Activated B cell treated with CpG ODN at 0.5 μM for 24 hours (primary cell): ENCODE measurements at regions of chr9 and their contacts with region 1.

Region 1: GRCh38 chr9:76393963-76394679 is at the start of gene RFK:
- DNase-seq: peak; percentile 98
- ATAC-seq: peak; percentile 90
- H3K4me3 Mint-ChIP-seq: peak within 1 kb of the TSS; percentile 99
- H3K27ac Mint-ChIP-seq: peak within 1 kb of the TSS; percentile 99
- H3K4me1 Mint-ChIP-seq: peaks cover 22% of the 10 kb centered on the region
- H3K27me3 Mint-ChIP-seq: no peaks in the 10 kb centered on the region
- CTCF ChIP-seq: no peak
- total RNA-seq, gene RFK: 7.7 and 8.0 TPM in 2 replicates

Region 2: DNA sequence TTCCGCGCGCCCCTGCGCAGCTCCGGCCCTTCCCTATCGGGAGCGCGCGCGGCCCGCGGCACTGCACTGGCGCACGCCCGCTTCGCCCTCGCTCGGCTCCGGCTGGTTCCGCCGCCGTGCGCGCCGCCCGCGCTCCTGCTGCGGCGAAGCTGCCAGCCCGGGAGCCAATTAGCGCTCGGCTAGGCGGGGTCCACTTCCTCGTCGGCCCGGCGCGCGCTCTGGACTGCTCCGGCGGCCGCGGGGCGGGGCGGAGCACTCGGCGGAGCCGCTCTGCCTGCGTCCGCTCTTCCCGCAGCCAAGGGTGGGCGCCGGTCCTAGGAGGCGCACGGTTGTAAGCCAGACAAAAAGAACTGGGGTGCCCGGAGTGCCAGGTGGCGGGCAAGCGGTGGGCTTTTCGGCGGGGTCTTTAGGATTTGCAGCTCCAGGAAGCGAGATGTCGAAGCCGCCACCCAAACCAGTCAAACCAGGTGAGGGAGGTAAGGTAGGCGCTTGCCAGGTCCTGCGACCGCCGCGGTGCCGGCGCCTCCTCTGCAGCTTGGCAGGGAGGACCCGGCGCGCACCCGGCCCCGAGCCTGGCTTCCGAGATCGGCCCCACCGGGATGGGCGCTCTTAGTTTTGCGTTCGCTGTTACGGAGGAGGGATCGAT is 1305.7 kb before region 1 on chr9 and contains the start of gene OSTF1:
- CTCF ChIA-PET with region 1: no interaction called
- POLR2A ChIA-PET with region 1: no interaction called
- intact Hi-C with region 1: loop called (anchors 5 kb)
- DNase-seq: peak; percentile 93
- ATAC-seq: peak; percentile 87
- H3K4me3 Mint-ChIP-seq: peak within 1 kb of the TSS; percentile 96
- H3K27ac Mint-ChIP-seq: peak within 1 kb of the TSS; percentile 88
- H3K4me1 Mint-ChIP-seq: peaks cover 51% of the 10 kb centered on the region
- H3K27me3 Mint-ChIP-seq: no peaks in the 10 kb centered on the region
- CTCF ChIP-seq: no peak
- total RNA-seq, gene OSTF1: 59.7 and 60.1 TPM in 2 replicates

Region 3: DNA sequence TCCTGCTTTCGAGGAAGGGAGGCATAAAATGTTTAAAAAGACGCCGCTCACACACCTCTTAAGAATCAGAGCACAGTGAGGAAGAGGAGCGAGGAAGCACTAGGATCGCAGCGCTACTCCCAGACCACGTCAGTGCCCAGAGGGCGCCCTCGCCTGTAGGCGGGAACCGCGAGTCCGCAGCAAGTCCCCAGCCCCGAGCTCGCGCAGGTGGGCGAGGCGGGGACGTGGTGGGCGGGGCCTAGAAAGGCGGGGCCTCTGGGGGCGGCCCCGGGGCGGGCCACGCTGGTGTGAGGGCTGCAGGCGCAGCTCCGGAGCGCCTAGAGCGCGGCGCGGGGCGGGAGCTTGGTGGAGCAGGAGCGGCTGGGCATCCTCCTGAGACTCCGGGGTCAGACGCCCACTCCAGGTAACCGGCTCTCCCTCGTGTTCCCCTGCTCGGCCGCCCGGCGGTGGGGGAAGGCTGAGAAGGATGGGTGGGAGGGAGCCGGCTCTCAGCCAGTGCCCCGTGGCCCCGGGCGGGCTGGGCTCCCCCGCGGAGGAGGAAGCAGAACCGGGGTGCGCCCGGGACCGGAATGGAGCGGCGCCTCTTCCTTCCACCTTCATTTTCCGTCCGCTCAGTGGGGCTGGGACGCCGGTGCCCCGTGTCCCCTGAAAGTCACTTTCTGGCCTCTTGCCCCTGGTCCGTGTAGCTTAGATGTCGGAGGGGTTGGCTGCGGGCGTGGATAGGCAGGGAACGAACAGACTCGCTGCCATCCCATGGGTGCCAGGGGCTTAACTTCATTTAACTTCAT is 65.0 kb after region 1 on chr9 and contains the start of gene GCNT1:
- CTCF ChIA-PET with region 1: interaction called, 7 read pairs
- POLR2A ChIA-PET with region 1: interaction called, 14 read pairs
- intact Hi-C with region 1: loop called (anchors 1 kb)
- DNase-seq: peak; percentile 99
- ATAC-seq: peak; percentile 95
- H3K4me3 Mint-ChIP-seq: peak within 1 kb of the TSS; percentile 94
- H3K27ac Mint-ChIP-seq: peak within 1 kb of the TSS; percentile 84
- H3K4me1 Mint-ChIP-seq: peaks cover 57% of the 10 kb centered on the region
- H3K27me3 Mint-ChIP-seq: no peaks in the 10 kb centered on the region
- CTCF ChIP-seq: no peak
- total RNA-seq, gene GCNT1: 9.2 and 10.6 TPM in 2 replicates

Region 4: DNA sequence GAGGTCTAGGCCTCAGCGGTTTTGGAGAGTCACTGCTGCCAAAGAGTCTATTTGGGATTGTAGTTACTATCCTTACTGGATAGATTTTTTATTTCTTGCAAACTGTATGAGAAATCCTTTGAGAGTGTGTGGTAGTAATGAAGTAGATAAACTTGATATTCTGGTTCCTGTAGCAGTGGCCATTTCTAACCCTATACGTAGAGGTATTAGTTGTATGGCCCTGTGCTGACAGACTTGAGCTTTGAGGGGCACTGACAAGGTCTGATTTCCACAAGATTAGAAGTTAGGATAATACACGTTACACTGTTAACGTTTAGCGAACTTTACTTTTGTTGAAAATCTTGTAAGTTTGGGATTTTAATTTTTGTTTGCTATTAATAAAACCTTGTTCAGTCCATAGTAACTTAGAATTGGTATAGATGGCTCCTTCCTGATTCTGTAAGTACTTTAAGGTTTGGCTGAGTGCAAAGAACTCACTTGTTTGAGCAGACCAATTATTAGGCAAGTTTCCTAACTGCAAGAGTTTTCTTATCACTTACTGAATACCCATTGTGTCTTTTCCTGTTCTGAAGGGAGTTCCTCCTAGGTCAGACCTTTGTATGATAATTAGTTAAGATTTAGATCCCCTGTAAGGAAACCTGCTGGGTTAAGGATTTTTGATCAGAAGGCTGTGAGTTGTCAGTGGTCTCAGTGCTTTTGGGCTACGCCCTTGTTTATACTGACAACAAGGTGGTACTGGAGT is 96.3 kb after region 1 on chr9:
- CTCF ChIA-PET with region 1: no interaction called
- POLR2A ChIA-PET with region 1: no interaction called
- intact Hi-C with region 1: no loop called
- DNase-seq: no peak
- ATAC-seq: no peak
- H3K4me3 Mint-ChIP-seq: no peak overlapping the region
- H3K27ac Mint-ChIP-seq: no peak overlapping the region
- H3K4me1 Mint-ChIP-seq: peaks cover 56% of the 10 kb centered on the region
- H3K27me3 Mint-ChIP-seq: no peaks in the 10 kb centered on the region
- CTCF ChIP-seq: no peak

Region 5: DNA sequence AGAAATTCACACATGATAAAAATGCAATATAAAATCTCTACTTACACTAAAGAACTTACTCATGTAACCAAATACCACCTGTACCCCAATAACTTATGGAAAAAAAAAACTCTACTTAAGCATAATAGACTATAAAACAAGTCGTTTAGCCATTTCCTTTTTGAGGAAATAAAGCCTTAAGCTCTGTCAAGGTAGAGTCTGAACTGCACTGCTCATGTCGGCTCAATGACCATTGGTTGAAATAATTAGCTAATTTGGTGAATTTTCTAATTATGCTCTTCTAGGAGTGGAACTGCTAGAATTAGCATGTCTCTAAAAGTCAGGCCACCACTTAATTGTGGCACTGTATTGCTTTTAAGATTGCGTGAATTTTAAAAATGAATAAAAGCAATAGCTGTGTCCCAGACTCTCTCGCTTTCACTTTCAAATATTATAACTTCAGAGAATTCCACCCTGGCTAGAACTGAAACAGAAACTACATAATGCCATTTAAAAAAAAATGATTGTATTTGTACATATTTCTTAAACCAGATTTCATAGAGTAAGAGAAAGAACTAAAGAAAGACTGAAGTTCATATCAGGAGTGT is 257.1 kb after region 1 on chr9:
- CTCF ChIA-PET with region 1: no interaction called
- POLR2A ChIA-PET with region 1: interaction called, 10 read pairs
- intact Hi-C with region 1: no loop called
- DNase-seq: no peak
- ATAC-seq: peak; percentile 47
- H3K4me3 Mint-ChIP-seq: peak overlapping the region; percentile 74
- H3K27ac Mint-ChIP-seq: no peak overlapping the region
- H3K4me1 Mint-ChIP-seq: peaks cover 47% of the 10 kb centered on the region
- H3K27me3 Mint-ChIP-seq: no peaks in the 10 kb centered on the region
- CTCF ChIP-seq: no peak

Region 6: GRCh38 chr9:76677481-76678055 is 283.4 kb after region 1 on chr9:
- CTCF ChIA-PET with region 1: no interaction called
- POLR2A ChIA-PET with region 1: no interaction called
- intact Hi-C with region 1: no loop called
- DNase-seq: no peak
- ATAC-seq: no peak
- H3K4me3 Mint-ChIP-seq: no peak overlapping the region
- H3K27ac Mint-ChIP-seq: no peak overlapping the region
- H3K4me1 Mint-ChIP-seq: no peaks in the 10 kb centered on the region
- H3K27me3 Mint-ChIP-seq: no peaks in the 10 kb centered on the region
- CTCF ChIP-seq: no peak

Region 7: GRCh38 chr9:77177161-77177893 is 783.2 kb after region 1 on chr9 and contains the start of gene VPS13A:
- CTCF ChIA-PET with region 1: no interaction called
- POLR2A ChIA-PET with region 1: interaction called, 14 read pairs
- intact Hi-C with region 1: loop called (anchors 1 kb)
- DNase-seq: peak; percentile 92
- ATAC-seq: peak; percentile 82
- H3K4me3 Mint-ChIP-seq: peak within 1 kb of the TSS; percentile 92
- H3K27ac Mint-ChIP-seq: peak within 1 kb of the TSS; percentile 83
- H3K4me1 Mint-ChIP-seq: peaks cover 29% of the 10 kb centered on the region
- H3K27me3 Mint-ChIP-seq: no peaks in the 10 kb centered on the region
- CTCF ChIP-seq: no peak
- total RNA-seq, gene VPS13A: 58.0 and 69.8 TPM in 2 replicates